Dorsolateral prefrontal cortex (tissue), 120 donors: ENCODE measurements at regions of chr4 and their contacts with region 1.

Region 1: GRCh38 chr4:128863312-128864075 is 54.0 kb downstream of the JADE1 start:
- DNase-seq: peak; percentile 43 to 85 (median 78)
- H3K4me3 ChIP-seq: peak overlapping the region in 1 of 59 donors; percentile 3
- H3K27ac ChIP-seq: peak overlapping the region in 29 of 59 donors; percentile 4 to 65 (median 42)
- H3K27me3 ChIP-seq: no peaks in the 10 kb centered on the region
- CTCF ChIP-seq: peak; percentile 81 to 99 (median 92)

Region 2: GRCh38 chr4:128191115-128191781 is 672.2 kb before region 1 on chr4:
- intact Hi-C with region 1: loop called in 1 of 2 experiments (anchors 5 kb)
- DNase-seq: peak in 8 of 10 donors; percentile 59 to 79 (median 70)
- H3K4me3 ChIP-seq: no peak overlapping the region
- H3K27ac ChIP-seq: peak overlapping the region in 1 of 59 donors; percentile 46
- H3K27me3 ChIP-seq: no peaks in the 10 kb centered on the region
- CTCF ChIP-seq: peak; percentile 67 to 91 (median 83)

Region 3: GRCh38 chr4:128454281-128455075 is 409.0 kb before region 1 on chr4:
- intact Hi-C with region 1: loop called (anchors 2 to 5 kb)
- DNase-seq: peak; percentile 32 to 87 (median 78)
- H3K4me3 ChIP-seq: peak overlapping the region in 21 of 59 donors; percentile 2 to 39 (median 24)
- H3K27ac ChIP-seq: peak overlapping the region in 3 of 59 donors; percentile 29 to 59 (median 30)
- H3K27me3 ChIP-seq: no peaks in the 10 kb centered on the region
- CTCF ChIP-seq: peak; percentile 42 to 83 (median 75)

Region 4: GRCh38 chr4:128574706-128575105 is 288.8 kb before region 1 on chr4:
- intact Hi-C with region 1: loop called (anchors 2 to 5 kb)
- DNase-seq: peak; percentile 24 to 94 (median 80)
- H3K4me3 ChIP-seq: no peak overlapping the region
- H3K27ac ChIP-seq: no peak overlapping the region
- H3K27me3 ChIP-seq: no peaks in the 10 kb centered on the region
- CTCF ChIP-seq: peak; percentile 59 to 94 (median 80)

Region 5: DNA sequence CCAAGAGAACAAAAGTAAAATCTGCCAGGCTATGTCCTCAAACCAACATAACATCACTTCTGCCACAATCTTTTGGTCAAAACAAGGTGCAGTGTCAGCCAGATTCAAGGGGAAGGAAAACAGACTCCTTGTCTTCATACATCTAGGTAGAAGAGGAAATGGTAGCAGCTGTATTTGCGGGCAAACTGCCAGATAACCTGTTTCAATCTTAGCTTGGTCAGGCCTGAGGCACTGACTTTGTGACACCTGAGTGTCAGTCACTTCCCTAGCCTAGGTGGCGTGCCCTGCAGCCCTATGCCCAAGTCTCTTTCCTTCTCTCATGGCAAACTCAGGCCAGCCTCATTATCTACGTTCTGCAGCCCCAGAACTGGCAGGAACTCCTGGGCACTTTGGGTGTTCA is 200.2 kb before region 1 on chr4:
- intact Hi-C with region 1: no loop called
- DNase-seq: no peak
- H3K4me3 ChIP-seq: no peak overlapping the region
- H3K27ac ChIP-seq: no peak overlapping the region
- H3K27me3 ChIP-seq: no peaks in the 10 kb centered on the region
- CTCF ChIP-seq: no peak

Region 6: GRCh38 chr4:128757712-128758111 is 105.8 kb before region 1 on chr4:
- intact Hi-C with region 1: no loop called
- DNase-seq: peak in 1 of 10 donors; percentile 6
- H3K4me3 ChIP-seq: no peak overlapping the region
- H3K27ac ChIP-seq: no peak overlapping the region
- H3K27me3 ChIP-seq: no peaks in the 10 kb centered on the region
- CTCF ChIP-seq: no peak

Region 7: GRCh38 chr4:128782875-128783614 is 80.4 kb before region 1 on chr4:
- intact Hi-C with region 1: loop called in 1 of 2 experiments (anchors 1 kb)
- DNase-seq: no peak
- H3K4me3 ChIP-seq: no peak overlapping the region
- H3K27ac ChIP-seq: no peak overlapping the region
- H3K27me3 ChIP-seq: no peaks in the 10 kb centered on the region
- CTCF ChIP-seq: no peak

Region 8: GRCh38 chr4:129093191-129093920 is 229.9 kb after region 1 on chr4 and contains the start of gene SCLT1:
- intact Hi-C with region 1: loop called in 1 of 2 experiments (anchors 10 kb)
- DNase-seq: peak; percentile 95 to 99 (median 98)
- H3K4me3 ChIP-seq: peak within 1 kb of the TSS; percentile 56 to 98 (median 85)
- H3K27ac ChIP-seq: peak within 1 kb of the TSS; percentile 16 to 98 (median 91)
- H3K27me3 ChIP-seq: no peaks in the 10 kb centered on the region
- CTCF ChIP-seq: peak in 20 of 56 donors; percentile 3 to 33 (median 17)
- total RNA-seq, gene SCLT1: 14.7 to 32.2 (median 21.4) TPM